Activated naive CD8-positive, alpha-beta T cell treated with anti-CD3 and anti-CD28 coated beads, Interleukin-2, amount 10 ng/mL, durations not matched to agents 7 days and 5 days (primary cell): ENCODE measurements at regions of chr5 and their contacts with region 1.

Region 1: GRCh38 chr5:80216753-80217596 is 38.9 kb downstream of the SERINC5 start:
- DNase-seq: peak; percentile 56
- ATAC-seq: peak; percentile 37
- H3K4me3 Mint-ChIP-seq: peak overlapping the region; percentile 88
- H3K27ac Mint-ChIP-seq: peak overlapping the region; percentile 89
- H3K4me1 Mint-ChIP-seq: peaks cover 73% of the 10 kb centered on the region
- H3K27me3 Mint-ChIP-seq: no peaks in the 10 kb centered on the region

Region 2: GRCh38 chr5:80181618-80182211 is 35.3 kb before region 1 on chr5:
- POLR2A ChIA-PET with region 1: interaction called, 28 read pairs
- DNase-seq: peak; percentile 46
- ATAC-seq: peak; percentile 63
- H3K4me3 Mint-ChIP-seq: peak overlapping the region; percentile 44
- H3K27ac Mint-ChIP-seq: peak overlapping the region; percentile 88
- H3K4me1 Mint-ChIP-seq: peaks cover 75% of the 10 kb centered on the region
- H3K27me3 Mint-ChIP-seq: no peaks in the 10 kb centered on the region

Region 3: DNA sequence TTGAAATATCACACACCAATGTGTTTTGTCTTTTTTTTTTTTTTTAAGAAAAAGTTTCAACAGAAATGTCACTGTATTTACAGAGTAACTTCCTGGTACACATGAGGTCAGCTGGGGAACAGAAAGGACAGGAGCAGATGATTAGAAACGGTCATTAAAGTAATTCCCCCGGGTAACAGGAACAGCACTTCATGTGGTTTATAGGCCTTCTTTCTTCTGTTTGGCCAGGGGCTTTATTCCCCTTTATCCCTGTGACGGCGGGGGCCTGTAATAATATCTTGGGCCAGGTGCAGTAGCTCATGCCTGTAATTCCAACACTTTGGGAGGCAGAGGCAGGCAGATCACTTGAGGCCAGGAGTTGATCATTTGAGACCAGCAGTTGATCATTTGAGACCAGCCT is 407.0 kb after region 1 on chr5:
- POLR2A ChIA-PET with region 1: no interaction called
- DNase-seq: no peak
- ATAC-seq: no peak
- H3K4me3 Mint-ChIP-seq: no peak overlapping the region
- H3K27ac Mint-ChIP-seq: no peak overlapping the region
- H3K4me1 Mint-ChIP-seq: no peaks in the 10 kb centered on the region
- H3K27me3 Mint-ChIP-seq: no peaks in the 10 kb centered on the region